Heart right ventricle (tissue), 16 donors: ENCODE measurements at regions of chr14 and their contacts with region 1.

Region 1: DNA sequence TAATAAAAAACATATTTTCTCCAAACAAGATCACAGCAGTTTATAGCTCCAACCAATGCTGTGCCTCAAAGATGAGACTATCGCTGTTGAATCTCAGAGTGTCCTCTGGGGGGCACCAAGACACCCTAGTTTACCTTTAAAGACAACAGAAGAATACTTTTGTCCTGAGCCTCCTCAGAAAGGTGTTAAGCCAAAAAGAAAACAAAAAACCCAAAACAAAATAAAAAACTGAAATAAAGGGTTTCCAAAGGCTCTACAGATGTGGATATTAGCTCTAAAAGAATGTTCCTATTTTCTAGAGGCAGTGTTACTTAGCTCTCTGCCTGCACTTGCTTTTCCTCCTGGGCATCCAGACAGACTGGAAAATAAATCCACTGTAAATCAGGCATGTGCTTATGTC is 86.9 kb upstream of the TTC7B start:
- DNase-seq: peak in 1 of 2 donors; percentile 58
- ATAC-seq: peak in 7 of 8 donors; percentile 72 to 88 (median 81)
- H3K4me3 ChIP-seq: no peak overlapping the region
- H3K27ac ChIP-seq: no peak overlapping the region
- H3K4me1 ChIP-seq: no peaks in the 10 kb centered on the region
- H3K27me3 ChIP-seq: no peaks in the 10 kb centered on the region
- CTCF ChIP-seq: peak; percentile 29 to 84 (median 74)

Region 2: GRCh38 chr14:90979515-90980239 is 76.6 kb after region 1 on chr14:
- intact Hi-C with region 1: no loop called
- DNase-seq: no peak
- ATAC-seq: no peak
- H3K4me3 ChIP-seq: no peak overlapping the region
- H3K27ac ChIP-seq: no peak overlapping the region
- H3K4me1 ChIP-seq: no peaks in the 10 kb centered on the region
- H3K27me3 ChIP-seq: no peaks in the 10 kb centered on the region
- CTCF ChIP-seq: no peak

Region 3: DNA sequence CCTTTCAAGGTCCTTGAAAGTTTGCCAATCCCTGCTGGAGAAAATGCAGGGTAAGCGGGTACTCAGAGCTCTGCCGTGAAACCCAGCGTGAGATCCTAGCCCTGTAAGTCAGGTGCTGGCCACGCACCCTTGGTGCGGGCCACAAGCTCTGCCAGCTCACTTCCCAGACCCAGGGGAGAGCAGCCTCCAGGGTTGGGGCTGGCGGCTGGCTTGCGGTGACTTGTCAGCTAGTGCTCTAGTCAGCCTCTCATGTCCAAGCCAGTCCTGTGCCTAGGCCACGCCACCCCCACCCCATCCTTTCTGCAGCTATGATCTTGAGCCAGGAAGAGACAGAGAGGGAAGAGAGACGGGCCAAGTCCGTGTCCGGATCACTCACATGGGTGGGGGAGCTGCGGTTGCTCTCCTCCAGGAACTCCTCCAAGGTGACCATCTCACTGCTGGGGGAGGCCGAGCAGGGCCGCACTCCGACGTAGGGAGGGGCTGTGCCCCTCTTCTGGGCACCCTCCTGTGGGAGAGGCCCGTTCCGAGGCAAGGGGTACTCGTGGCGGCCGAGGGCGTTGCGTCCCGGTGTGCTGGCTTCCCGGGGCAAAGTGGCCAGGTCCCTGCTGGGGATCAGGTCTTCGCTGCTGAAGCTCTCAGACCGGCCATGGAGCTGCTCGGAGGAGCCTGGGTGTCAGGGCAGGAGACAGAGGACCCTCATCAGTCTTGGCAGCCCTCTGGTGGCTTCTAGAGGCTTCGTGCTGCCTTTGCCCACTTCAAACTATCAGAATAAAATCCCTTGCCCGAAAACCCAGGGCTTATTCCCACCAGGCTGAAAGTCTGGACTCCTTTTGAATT is 374.7 kb after region 1 on chr14:
- intact Hi-C with region 1: loop called in 2 of 10 experiments (anchors 5 to 10 kb)
- DNase-seq: no peak
- ATAC-seq: peak in 2 of 8 donors; percentile 14 to 46
- H3K4me3 ChIP-seq: no peak overlapping the region
- H3K27ac ChIP-seq: no peak overlapping the region
- H3K4me1 ChIP-seq: no peaks in the 10 kb centered on the region
- H3K27me3 ChIP-seq: no peaks in the 10 kb centered on the region
- CTCF ChIP-seq: no peak

Region 4: GRCh38 chr14:91286530-91286937 is 383.4 kb after region 1 on chr14:
- intact Hi-C with region 1: loop called in 8 of 10 experiments (anchors 2 to 5 kb)
- DNase-seq: peak; percentile 66 to 74
- ATAC-seq: peak; percentile 45 to 76 (median 66)
- H3K4me3 ChIP-seq: no peak overlapping the region
- H3K27ac ChIP-seq: no peak overlapping the region
- H3K4me1 ChIP-seq: peaks cover 0 to 19% (median 4%) of the 10 kb centered on the region in 9 donors
- H3K27me3 ChIP-seq: no peaks in the 10 kb centered on the region
- CTCF ChIP-seq: peak; percentile 83 to 93 (median 90)